CD8-positive, alpha-beta T cell (primary cell): ENCODE measurements at regions of chr11 and their contacts with region 1.

Region 1: GRCh38 chr11:63478896-63479295 is 12.1 kb downstream of the PLAAT5 start:
- DNase-seq: peak; percentile 23 to 78 (median 56)
- ATAC-seq: peak; percentile 78
- H3K4me3 ChIP-seq: no peak overlapping the region
- H3K4me3 Mint-ChIP-seq: no peak overlapping the region
- H3K27ac ChIP-seq: no peak overlapping the region
- H3K27ac Mint-ChIP-seq: no peak overlapping the region
- H3K4me1 ChIP-seq: peaks cover 3% of the 10 kb centered on the region
- H3K4me1 Mint-ChIP-seq: no peaks in the 10 kb centered on the region
- H3K27me3 ChIP-seq: no peaks in the 10 kb centered on the region
- H3K27me3 Mint-ChIP-seq: no peaks in the 10 kb centered on the region
- CTCF ChIP-seq: peak; percentile 91

Region 2: GRCh38 chr11:63369165-63369970 is 109.5 kb before region 1 on chr11 and contains the start of gene SLC22A9:
- CTCF ChIA-PET with region 1: no interaction called
- POLR2A ChIA-PET with region 1: no interaction called
- intact Hi-C with region 1: no loop called
- DNase-seq: no peak
- ATAC-seq: no peak
- H3K4me3 ChIP-seq: no peak within 1 kb of the TSS
- H3K4me3 Mint-ChIP-seq: no peak within 1 kb of the TSS
- H3K27ac ChIP-seq: no peak within 1 kb of the TSS
- H3K27ac Mint-ChIP-seq: no peak within 1 kb of the TSS
- H3K4me1 ChIP-seq: no peaks in the 10 kb centered on the region
- H3K4me1 Mint-ChIP-seq: no peaks in the 10 kb centered on the region
- H3K27me3 ChIP-seq: no peaks in the 10 kb centered on the region
- H3K27me3 Mint-ChIP-seq: peaks cover 46% of the 10 kb centered on the region
- CTCF ChIP-seq: no peak
- total RNA-seq, gene SLC22A9: not detected

Region 3: DNA sequence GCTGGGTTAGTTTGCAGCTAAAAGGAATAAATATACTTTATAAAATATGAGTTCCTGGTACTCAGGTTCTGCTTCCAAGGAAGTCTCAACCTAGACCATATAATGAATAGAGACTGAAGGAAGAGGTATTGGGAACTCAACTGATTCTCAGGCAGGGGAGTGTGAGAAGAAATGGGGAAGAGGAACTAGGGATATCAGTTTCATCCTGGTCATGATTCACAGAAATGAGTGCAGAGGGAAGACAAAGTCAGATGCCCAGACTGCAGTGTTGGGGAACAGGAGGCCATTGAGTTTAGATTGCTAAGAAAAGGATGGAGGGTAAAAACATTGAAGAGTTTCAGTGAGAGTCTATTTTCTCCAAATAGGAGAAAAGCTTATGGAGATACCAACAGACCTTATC is 16.8 kb before region 1 on chr11:
- CTCF ChIA-PET with region 1: interaction called, 14 read pairs
- POLR2A ChIA-PET with region 1: no interaction called
- intact Hi-C with region 1: no loop called
- DNase-seq: no peak
- ATAC-seq: no peak
- H3K4me3 ChIP-seq: no peak overlapping the region
- H3K4me3 Mint-ChIP-seq: no peak overlapping the region
- H3K27ac ChIP-seq: no peak overlapping the region
- H3K27ac Mint-ChIP-seq: no peak overlapping the region
- H3K4me1 ChIP-seq: no peaks in the 10 kb centered on the region
- H3K4me1 Mint-ChIP-seq: no peaks in the 10 kb centered on the region
- H3K27me3 ChIP-seq: no peaks in the 10 kb centered on the region
- H3K27me3 Mint-ChIP-seq: peaks cover 10% of the 10 kb centered on the region
- CTCF ChIP-seq: no peak

Region 4: DNA sequence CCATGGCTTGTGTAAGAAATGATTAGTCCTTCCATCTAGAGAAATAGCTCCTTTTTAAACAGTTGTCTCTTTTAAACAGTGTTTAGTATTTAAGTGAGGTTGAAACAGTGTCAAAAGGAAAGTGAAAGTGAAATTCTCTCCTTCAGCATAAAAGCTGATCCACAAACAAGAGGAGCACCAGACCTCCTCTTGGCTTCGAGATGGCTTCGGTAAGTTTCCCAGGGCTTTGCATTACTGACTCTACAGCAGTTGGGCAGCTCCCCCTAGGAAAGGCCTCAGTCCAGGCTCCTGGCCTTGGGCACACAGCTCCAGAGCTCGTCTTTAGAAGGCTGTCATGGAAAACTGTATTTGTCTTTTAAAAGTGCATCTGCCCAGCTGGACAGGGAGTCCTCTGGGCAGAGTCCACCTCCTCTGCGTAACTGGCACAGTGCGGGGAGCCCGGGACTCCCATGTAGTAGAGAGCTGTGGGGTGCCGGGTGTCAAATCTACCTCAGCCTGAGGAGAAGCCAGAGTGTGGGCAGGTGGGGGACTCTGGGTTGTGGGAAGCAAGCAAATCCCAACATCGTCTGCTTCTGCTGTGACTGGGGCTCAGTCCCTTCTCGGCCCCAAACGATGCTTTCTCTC is 57.9 kb after region 1 on chr11 and contains the start of gene PLAAT4:
- CTCF ChIA-PET with region 1: interaction called, 34 read pairs
- POLR2A ChIA-PET with region 1: no interaction called
- intact Hi-C with region 1: no loop called
- DNase-seq: peak in 5 of 9 experiments; percentile 21 to 81 (median 65)
- ATAC-seq: peak; percentile 53
- H3K4me3 ChIP-seq: peak within 1 kb of the TSS; percentile 71 to 85
- H3K4me3 Mint-ChIP-seq: peak within 1 kb of the TSS; percentile 92
- H3K27ac ChIP-seq: peak within 1 kb of the TSS; percentile 83 to 84
- H3K27ac Mint-ChIP-seq: peak within 1 kb of the TSS; percentile 97
- H3K4me1 ChIP-seq: peaks cover 84% of the 10 kb centered on the region
- H3K4me1 Mint-ChIP-seq: peaks cover 85% of the 10 kb centered on the region
- H3K27me3 ChIP-seq: no peaks in the 10 kb centered on the region
- H3K27me3 Mint-ChIP-seq: no peaks in the 10 kb centered on the region
- CTCF ChIP-seq: no peak
- total RNA-seq, gene PLAAT4: 81.9 to 84.0 TPM

Region 5: DNA sequence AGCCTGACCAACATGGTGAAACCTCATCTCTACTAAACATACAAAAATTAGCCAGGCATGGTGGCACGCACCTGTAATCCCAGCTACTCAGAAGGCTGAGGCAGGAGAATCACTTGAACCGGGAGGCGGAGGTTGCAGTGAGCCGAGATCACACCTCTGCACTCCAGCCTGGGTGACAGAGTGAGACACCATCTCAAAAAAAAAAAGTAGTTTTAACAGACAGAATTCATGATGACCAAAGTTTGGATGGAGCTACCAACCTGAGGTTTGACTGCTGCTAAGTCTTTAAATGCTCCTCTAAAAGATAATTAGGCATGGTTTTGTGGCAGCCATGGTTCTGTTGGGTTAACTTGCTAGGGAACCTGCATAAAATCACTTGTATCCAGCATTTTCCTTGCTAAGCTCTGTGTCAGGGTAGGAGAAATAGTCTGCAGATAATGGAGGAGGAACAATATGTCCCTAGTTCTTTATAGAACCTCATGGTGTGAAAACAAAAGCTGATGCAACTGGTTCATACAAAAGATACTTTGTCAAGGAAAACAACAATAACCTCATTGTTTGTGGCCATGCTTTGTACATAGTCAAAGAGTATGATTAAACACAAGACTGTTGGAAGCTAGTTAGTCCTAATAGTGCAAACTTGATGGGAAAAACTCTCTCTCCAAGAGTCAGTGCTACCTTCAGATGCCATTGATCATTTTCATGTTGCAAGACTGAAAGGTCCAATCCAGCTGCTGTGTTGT is 104.2 kb after region 1 on chr11:
- CTCF ChIA-PET with region 1: interaction called, 12 read pairs
- POLR2A ChIA-PET with region 1: no interaction called
- intact Hi-C with region 1: no loop called
- DNase-seq: peak in 1 of 9 experiments; percentile 22
- ATAC-seq: no peak
- H3K4me3 ChIP-seq: no peak overlapping the region
- H3K4me3 Mint-ChIP-seq: peak overlapping the region; percentile 23
- H3K27ac ChIP-seq: peak overlapping the region in 1 of 2 experiments; percentile 74
- H3K27ac Mint-ChIP-seq: peak overlapping the region; percentile 38
- H3K4me1 ChIP-seq: peaks cover 14% of the 10 kb centered on the region
- H3K4me1 Mint-ChIP-seq: peaks cover 15% of the 10 kb centered on the region
- H3K27me3 ChIP-seq: no peaks in the 10 kb centered on the region
- H3K27me3 Mint-ChIP-seq: no peaks in the 10 kb centered on the region
- CTCF ChIP-seq: no peak

Region 6: DNA sequence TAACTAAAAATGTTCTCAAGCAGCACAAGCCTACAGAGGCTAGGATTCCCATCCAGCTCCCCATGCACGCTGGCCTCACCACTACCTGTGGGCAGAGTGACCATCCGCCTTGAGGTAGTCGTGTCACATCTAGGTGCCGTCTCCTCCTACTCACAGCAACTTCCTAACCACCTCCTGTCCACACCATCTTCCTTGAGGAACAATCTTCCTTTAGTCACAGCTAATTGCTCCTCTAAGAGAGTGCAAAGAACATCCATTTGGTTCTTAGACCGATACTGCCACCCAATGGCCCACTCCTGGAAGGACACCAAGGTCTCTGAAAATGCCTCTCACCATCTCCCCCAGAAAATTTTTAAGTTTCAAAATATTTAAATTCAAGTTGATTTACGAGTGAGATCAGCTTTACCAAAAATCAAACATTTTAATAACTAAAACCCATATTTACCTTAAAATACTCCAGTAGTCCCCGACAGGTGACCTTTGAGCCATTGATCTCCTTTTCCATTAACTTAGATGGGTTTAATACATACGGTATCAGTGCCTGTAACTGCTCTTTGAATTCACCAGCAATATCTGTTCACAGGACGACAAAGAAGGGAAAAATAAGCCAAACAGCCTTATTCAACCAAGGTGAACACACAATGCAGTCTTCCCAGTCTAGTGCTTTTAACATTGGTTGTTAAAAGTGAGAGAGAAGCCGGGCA is 157.0 kb after region 1 on chr11:
- CTCF ChIA-PET with region 1: interaction called, 228 read pairs
- POLR2A ChIA-PET with region 1: interaction called, 7 read pairs
- intact Hi-C with region 1: loop called (anchors 1 kb)
- DNase-seq: peak; percentile 60 to 82 (median 75)
- ATAC-seq: peak; percentile 89
- H3K4me3 ChIP-seq: no peak overlapping the region
- H3K4me3 Mint-ChIP-seq: no peak overlapping the region
- H3K27ac ChIP-seq: no peak overlapping the region
- H3K27ac Mint-ChIP-seq: no peak overlapping the region
- H3K4me1 ChIP-seq: no peaks in the 10 kb centered on the region
- H3K4me1 Mint-ChIP-seq: peaks cover 8% of the 10 kb centered on the region
- H3K27me3 ChIP-seq: no peaks in the 10 kb centered on the region
- H3K27me3 Mint-ChIP-seq: no peaks in the 10 kb centered on the region
- CTCF ChIP-seq: peak; percentile 93

Region 7: DNA sequence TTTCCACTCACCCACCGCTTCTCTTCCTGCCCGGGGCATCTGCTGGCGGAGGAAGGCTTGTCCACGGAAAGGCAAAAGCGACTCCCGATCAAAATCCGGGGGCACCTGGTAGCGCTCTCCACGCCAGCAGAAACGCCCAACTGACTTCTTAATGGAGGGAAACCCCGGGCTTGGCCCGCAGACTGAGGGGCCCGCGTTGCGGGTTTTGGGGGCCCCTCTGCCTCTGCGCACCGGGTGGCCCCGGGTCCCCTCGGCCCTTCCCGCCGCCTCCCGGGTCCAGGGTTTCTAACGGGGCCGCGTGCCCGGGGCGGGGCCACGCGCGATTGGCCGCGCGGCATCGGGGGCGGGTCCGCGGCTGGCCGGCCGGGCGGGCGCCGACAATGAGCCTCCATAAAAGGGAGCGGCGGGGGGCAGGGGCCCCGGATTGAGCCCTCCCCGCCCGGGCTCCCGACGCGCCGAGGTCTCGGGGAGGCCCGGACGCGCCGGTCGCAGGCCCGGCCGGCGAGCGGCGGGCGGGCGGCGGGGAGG is 334.2 kb after region 1 on chr11 and contains the start of gene SPINDOC:
- CTCF ChIA-PET with region 1: no interaction called
- POLR2A ChIA-PET with region 1: no interaction called
- intact Hi-C with region 1: no loop called
- DNase-seq: peak; percentile 29 to 83 (median 70)
- ATAC-seq: peak; percentile 88
- H3K4me3 ChIP-seq: peak within 1 kb of the TSS; percentile 80 to 92
- H3K4me3 Mint-ChIP-seq: peak within 1 kb of the TSS; percentile 79
- H3K27ac ChIP-seq: peak within 1 kb of the TSS; percentile 35 to 44
- H3K27ac Mint-ChIP-seq: peak within 1 kb of the TSS; percentile 22
- H3K4me1 ChIP-seq: peaks cover 12% of the 10 kb centered on the region
- H3K4me1 Mint-ChIP-seq: peaks cover 24% of the 10 kb centered on the region
- H3K27me3 ChIP-seq: no peaks in the 10 kb centered on the region
- H3K27me3 Mint-ChIP-seq: no peaks in the 10 kb centered on the region
- CTCF ChIP-seq: no peak
- total RNA-seq, gene SPINDOC: 4.0 to 4.1 TPM

Region 8: GRCh38 chr11:65204646-65205601 is 1726.0 kb after region 1 on chr11:
- CTCF ChIA-PET with region 1: no interaction called
- POLR2A ChIA-PET with region 1: no interaction called
- intact Hi-C with region 1: no loop called
- DNase-seq: peak in 7 of 9 experiments; percentile 16 to 66 (median 63)
- ATAC-seq: peak; percentile 75
- H3K4me3 ChIP-seq: no peak overlapping the region
- H3K4me3 Mint-ChIP-seq: no peak overlapping the region
- H3K27ac ChIP-seq: no peak overlapping the region
- H3K27ac Mint-ChIP-seq: no peak overlapping the region
- H3K4me1 ChIP-seq: no peaks in the 10 kb centered on the region
- H3K4me1 Mint-ChIP-seq: peaks cover 4% of the 10 kb centered on the region
- H3K27me3 ChIP-seq: no peaks in the 10 kb centered on the region
- H3K27me3 Mint-ChIP-seq: no peaks in the 10 kb centered on the region
- CTCF ChIP-seq: peak; percentile 93